Mammary epithelial cell (primary cell): ENCODE measurements at regions of chr11 and their contacts with region 1.

Region 1: DNA sequence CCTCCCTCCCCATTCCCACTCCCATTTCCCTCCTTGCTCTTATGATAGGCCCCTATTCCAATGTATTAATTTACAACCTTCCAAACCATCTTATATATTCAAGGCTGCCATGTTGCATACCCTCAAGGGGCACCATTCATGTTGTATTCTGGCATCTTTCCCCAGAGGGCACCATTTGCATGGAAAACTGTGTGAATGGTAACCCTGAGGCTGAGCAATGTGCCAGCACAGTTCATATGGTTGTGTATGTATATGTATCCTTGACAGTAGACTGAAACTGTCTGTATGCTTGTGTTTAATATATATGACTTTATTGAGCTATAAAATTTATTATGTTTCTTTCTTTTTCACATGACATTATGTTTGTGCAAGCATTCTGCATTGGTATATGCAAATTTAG is 7.3 kb downstream of the RASSF10 start:
- DNase-seq: peak; percentile 44
- H3K4me3 ChIP-seq: no peak overlapping the region
- H3K27ac ChIP-seq: no peak overlapping the region
- H3K4me1 ChIP-seq: peaks cover 21% of the 10 kb centered on the region
- H3K27me3 ChIP-seq: no peaks in the 10 kb centered on the region
- CTCF ChIP-seq: peak; percentile 26 to 42

Region 2: GRCh38 chr11:12995188-12995587 is 21.2 kb before region 1 on chr11:
- CTCF ChIA-PET with region 1: no interaction called
- dilution Hi-C with region 1: no loop called
- in situ Hi-C with region 1: no loop called
- intact Hi-C with region 1: no loop called
- DNase-seq: no peak
- H3K4me3 ChIP-seq: no peak overlapping the region
- H3K27ac ChIP-seq: no peak overlapping the region
- H3K4me1 ChIP-seq: peaks cover 23% of the 10 kb centered on the region
- H3K27me3 ChIP-seq: no peaks in the 10 kb centered on the region
- CTCF ChIP-seq: no peak

Region 3: GRCh38 chr11:13040969-13041561 is 24.6 kb after region 1 on chr11:
- CTCF ChIA-PET with region 1: no interaction called
- dilution Hi-C with region 1: no loop called
- in situ Hi-C with region 1: no loop called
- intact Hi-C with region 1: no loop called
- DNase-seq: no peak
- H3K4me3 ChIP-seq: no peak overlapping the region
- H3K27ac ChIP-seq: no peak overlapping the region
- H3K4me1 ChIP-seq: peaks cover 14% of the 10 kb centered on the region
- H3K27me3 ChIP-seq: no peaks in the 10 kb centered on the region
- CTCF ChIP-seq: no peak

Region 4: GRCh38 chr11:13145461-13145860 is 129.0 kb after region 1 on chr11:
- CTCF ChIA-PET with region 1: no interaction called
- dilution Hi-C with region 1: no loop called
- in situ Hi-C with region 1: loop called in 1 of 2 experiments (anchors 5 kb)
- intact Hi-C with region 1: no loop called
- DNase-seq: no peak
- H3K4me3 ChIP-seq: no peak overlapping the region
- H3K27ac ChIP-seq: no peak overlapping the region
- H3K4me1 ChIP-seq: peaks cover 25% of the 10 kb centered on the region
- H3K27me3 ChIP-seq: no peaks in the 10 kb centered on the region
- CTCF ChIP-seq: no peak

Region 5: DNA sequence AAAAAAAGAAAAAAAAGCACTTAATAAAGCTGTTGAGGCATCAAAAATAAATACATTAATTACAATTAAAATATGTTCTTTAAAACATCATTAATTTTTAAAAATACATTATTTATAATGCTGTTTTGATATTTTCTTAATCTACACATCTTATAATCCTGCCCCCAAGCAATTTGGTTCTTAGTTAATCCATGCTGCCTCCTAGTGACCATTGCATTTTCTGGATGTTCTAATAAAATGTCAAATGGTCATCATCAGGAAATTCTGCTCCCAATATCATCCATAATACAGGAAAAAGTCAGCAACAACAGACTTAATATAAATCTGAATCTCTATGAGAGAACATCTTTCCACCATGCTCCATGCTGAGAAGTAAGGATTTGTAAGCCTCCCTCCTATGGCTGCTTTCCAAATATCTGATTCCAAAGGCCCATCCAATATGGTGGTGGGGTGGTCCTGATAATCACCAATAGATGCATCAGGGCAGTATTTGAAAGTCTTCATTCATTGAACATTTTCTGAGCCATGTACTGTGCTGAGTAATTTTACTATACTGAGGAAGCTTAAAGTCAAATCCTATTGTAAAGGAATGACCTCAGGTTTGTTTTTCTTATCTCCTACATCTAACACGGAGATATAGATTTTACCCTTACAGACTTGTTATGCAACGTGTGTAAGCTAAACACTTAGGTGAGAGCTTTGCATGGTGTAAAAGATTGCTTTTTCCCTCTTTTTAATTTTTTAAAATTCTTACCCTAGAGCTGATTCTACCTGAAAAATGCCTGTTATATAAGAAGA is 136.5 kb after region 1 on chr11:
- CTCF ChIA-PET with region 1: no interaction called
- dilution Hi-C with region 1: no loop called
- in situ Hi-C with region 1: loop called in 1 of 2 experiments (anchors 5 kb)
- intact Hi-C with region 1: loop called (anchors 1 kb)
- DNase-seq: no peak
- H3K4me3 ChIP-seq: no peak overlapping the region
- H3K27ac ChIP-seq: no peak overlapping the region
- H3K4me1 ChIP-seq: peaks cover 15% of the 10 kb centered on the region
- H3K27me3 ChIP-seq: no peaks in the 10 kb centered on the region
- CTCF ChIP-seq: peak; percentile 65 to 73

Region 6: GRCh38 chr11:13183094-13183825 is 166.8 kb after region 1 on chr11:
- CTCF ChIA-PET with region 1: no interaction called
- dilution Hi-C with region 1: no loop called
- in situ Hi-C with region 1: no loop called
- intact Hi-C with region 1: loop called (anchors 1 kb)
- DNase-seq: peak; percentile 77
- H3K4me3 ChIP-seq: peak overlapping the region in 2 of 3 experiments; percentile 4 to 27
- H3K27ac ChIP-seq: peak overlapping the region; percentile 5
- H3K4me1 ChIP-seq: peaks cover 7% of the 10 kb centered on the region
- H3K27me3 ChIP-seq: no peaks in the 10 kb centered on the region
- CTCF ChIP-seq: peak; percentile 56 to 63

Region 7: DNA sequence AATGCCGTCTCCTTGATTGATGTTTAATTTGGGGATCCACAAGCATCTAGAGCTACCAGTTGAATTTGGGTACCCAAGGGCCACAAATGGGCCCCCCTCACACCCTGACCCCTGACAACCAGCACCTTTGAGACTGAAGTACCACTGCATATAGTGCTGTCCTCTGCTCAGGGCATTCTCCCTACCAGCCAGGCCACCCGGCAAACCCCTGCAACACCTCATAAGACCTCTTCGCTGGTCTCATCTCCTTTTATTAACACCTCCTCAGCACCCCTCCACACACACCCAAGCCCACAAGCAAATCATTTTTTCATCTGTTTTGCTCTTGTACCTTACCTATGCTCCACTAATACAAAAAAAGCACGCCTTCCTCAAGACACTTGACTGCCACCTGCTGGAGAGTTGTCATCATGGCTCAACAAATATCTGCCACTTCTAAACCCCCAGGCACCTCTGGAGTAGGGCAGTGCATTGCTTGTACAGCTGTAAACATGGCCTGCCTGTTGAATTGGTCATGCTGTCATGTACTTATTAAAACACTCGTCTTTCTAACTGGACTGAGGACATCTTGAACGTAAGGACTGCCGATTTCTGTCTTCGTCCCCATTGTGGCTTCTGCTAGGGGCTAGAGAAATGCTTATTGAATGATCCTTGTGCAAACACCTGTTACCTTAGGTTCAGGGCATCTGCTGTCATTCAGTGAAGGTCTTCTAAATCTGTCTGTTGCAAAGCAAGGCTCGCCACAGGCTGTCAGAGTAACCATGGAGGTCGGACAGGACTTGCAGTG is 327.7 kb after region 1 on chr11:
- CTCF ChIA-PET with region 1: no interaction called
- dilution Hi-C with region 1: no loop called
- in situ Hi-C with region 1: no loop called
- intact Hi-C with region 1: no loop called
- DNase-seq: peak; percentile 64
- H3K4me3 ChIP-seq: no peak overlapping the region
- H3K27ac ChIP-seq: no peak overlapping the region
- H3K4me1 ChIP-seq: peaks cover 30% of the 10 kb centered on the region
- H3K27me3 ChIP-seq: no peaks in the 10 kb centered on the region
- CTCF ChIP-seq: peak; percentile 79 to 82